PC-9 (cell line): ENCODE measurements at regions of chr20 and their contacts with region 1.

Region 1: GRCh38 chr20:49122920-49123319 is 65.2 kb downstream of the STAU1 start:
- DNase-seq: peak in 1 of 2 experiments; percentile 18
- H3K4me3 ChIP-seq: no peak overlapping the region
- H3K27ac ChIP-seq: no peak overlapping the region
- H3K4me1 ChIP-seq: no peaks in the 10 kb centered on the region
- H3K27me3 ChIP-seq: no peaks in the 10 kb centered on the region
- CTCF ChIP-seq: no peak

Region 2: GRCh38 chr20:48648550-48648951 is 474.4 kb before region 1 on chr20:
- CTCF ChIA-PET with region 1: interaction called, 18 read pairs
- POLR2A ChIA-PET with region 1: no interaction called
- intact Hi-C with region 1: no loop called
- DNase-seq: peak; percentile 50 to 74
- H3K4me3 ChIP-seq: no peak overlapping the region
- H3K27ac ChIP-seq: no peak overlapping the region
- H3K4me1 ChIP-seq: peaks cover 12% of the 10 kb centered on the region
- H3K27me3 ChIP-seq: no peaks in the 10 kb centered on the region
- CTCF ChIP-seq: no peak

Region 3: GRCh38 chr20:49103019-49103418 is 19.9 kb before region 1 on chr20:
- CTCF ChIA-PET with region 1: no interaction called
- POLR2A ChIA-PET with region 1: no interaction called
- intact Hi-C with region 1: no loop called
- DNase-seq: no peak
- H3K4me3 ChIP-seq: no peak overlapping the region
- H3K27ac ChIP-seq: no peak overlapping the region
- H3K4me1 ChIP-seq: no peaks in the 10 kb centered on the region
- H3K27me3 ChIP-seq: no peaks in the 10 kb centered on the region
- CTCF ChIP-seq: no peak

Region 4: DNA sequence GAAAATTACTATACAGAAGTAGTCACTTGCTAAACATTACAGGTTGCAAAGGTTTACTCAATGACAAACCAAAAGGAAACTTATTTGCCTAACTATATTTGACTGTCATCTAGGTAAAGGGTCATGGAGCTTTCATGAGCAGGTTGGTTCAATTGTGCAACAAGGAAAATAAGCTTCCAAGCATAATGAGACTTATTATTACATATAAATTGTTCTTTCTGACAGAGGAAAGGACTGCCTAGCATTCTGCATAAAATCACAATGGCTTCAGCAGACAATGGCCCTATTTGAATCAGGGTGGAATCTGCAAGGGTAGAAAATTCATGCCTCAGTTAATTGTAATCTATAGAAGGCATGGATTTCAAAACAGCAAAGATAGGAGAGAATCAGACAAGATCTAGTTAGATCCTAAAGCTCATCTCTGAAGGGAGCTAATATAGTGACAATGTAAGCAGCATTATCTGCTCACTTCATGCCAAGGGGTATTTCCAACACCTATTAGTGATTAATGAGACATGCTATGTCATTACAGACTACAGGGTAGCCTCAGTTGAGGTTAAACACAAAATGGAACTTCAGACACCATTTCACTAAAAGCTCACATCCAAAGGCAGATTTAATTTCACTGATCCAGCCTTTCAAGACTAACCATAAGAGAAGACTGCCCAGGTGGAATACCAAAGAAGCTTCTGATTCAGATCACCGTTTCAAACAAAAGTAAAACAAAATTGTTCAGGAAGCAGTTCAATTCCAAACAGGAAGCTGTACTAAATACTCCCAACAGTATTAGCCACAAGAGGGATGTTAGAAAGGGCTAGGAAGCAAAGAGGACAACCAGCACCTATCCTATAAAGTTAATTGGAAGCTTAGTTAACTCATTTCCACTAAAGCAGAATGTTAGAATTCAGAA is 56.7 kb after region 1 on chr20:
- CTCF ChIA-PET with region 1: interaction called, 8 read pairs
- POLR2A ChIA-PET with region 1: interaction called, 34 read pairs
- intact Hi-C with region 1: no loop called
- DNase-seq: peak in 1 of 2 experiments; percentile 77
- H3K4me3 ChIP-seq: peak overlapping the region; percentile 23; the same call in 1 of the 2 replicates
- H3K27ac ChIP-seq: peak overlapping the region; percentile 61
- H3K4me1 ChIP-seq: peaks cover 25% of the 10 kb centered on the region
- H3K27me3 ChIP-seq: no peaks in the 10 kb centered on the region
- CTCF ChIP-seq: no peak